Activated CD4-positive, alpha-beta T cell treated with anti-CD3 and anti-CD28 coated beads, Interleukin-2, amount 10 ng/mL, durations not matched to agents 7 days and 5 days (primary cell): ENCODE measurements at regions of chr12 and their contacts with region 1.

Region 1: DNA sequence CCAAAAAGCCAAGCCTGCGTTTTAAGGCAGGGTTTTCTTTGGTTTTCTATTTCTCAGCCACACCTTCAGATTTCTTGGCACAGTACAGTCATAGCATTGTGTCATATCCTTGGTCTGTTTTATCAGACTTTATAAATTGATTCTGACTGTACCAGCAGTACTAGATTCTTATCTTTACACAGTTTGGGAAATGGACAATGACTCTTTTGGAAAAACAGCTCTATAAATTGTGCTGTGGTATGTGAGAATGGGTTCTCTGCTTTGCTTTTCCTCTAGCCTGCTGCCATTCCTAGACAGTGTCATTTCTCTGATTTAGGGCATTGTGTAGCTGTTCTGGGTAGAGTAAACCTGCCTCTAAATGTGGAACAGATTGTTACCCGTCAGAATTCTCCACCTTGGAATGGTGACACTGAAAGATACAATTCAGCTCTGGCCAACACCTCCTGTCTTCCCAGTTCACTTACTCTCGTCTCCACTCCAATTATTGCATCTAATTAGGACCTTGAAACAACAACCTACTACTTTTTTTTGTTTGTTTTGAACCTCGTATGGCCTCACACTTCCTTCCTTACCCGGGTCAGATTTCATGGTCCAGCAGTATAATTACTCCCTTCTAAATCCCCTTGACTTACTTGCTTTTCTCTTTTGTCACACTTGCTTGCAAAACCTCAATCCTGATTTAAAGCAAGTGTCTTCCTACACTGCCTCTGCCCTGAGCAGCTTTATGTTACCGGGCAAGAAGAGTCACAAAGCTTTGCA is 226.3 kb downstream of the ERC1 start:
- DNase-seq: no peak
- H3K4me3 Mint-ChIP-seq: no peak overlapping the region
- H3K27ac Mint-ChIP-seq: no peak overlapping the region
- H3K4me1 Mint-ChIP-seq: peaks cover under 1% of the 10 kb centered on the region
- H3K27me3 Mint-ChIP-seq: no peaks in the 10 kb centered on the region

Region 2: DNA sequence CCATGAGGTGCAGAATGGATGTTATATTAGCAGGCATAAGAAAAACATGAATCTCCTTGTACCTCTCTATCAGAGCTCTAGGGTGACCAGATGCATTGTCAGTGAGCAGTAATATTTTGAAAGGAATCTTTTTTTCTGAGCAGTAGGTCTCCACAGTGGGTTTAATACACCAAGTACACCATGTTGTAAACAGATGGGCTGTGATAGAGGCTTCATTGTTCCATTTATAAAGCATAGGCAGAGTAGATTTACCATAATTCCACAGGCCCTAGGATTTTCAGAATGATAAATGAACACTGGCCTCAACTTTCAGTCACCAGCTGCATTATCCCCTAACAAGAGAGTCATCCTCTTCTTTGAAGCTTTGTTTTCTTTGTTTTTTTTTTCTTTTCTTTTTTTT is 41.2 kb before region 1 on chr12:
- CTCF ChIA-PET with region 1: no interaction called
- POLR2A ChIA-PET with region 1: no interaction called
- DNase-seq: no peak
- H3K4me3 Mint-ChIP-seq: no peak overlapping the region
- H3K27ac Mint-ChIP-seq: no peak overlapping the region
- H3K4me1 Mint-ChIP-seq: no peaks in the 10 kb centered on the region
- H3K27me3 Mint-ChIP-seq: no peaks in the 10 kb centered on the region

Region 3: GRCh38 chr12:1199700-1200099 is 17.7 kb before region 1 on chr12:
- CTCF ChIA-PET with region 1: interaction called, 3 read pairs
- POLR2A ChIA-PET with region 1: interaction called, 10 read pairs
- DNase-seq: no peak
- H3K4me3 Mint-ChIP-seq: no peak overlapping the region
- H3K27ac Mint-ChIP-seq: no peak overlapping the region
- H3K4me1 Mint-ChIP-seq: peaks cover 11% of the 10 kb centered on the region
- H3K27me3 Mint-ChIP-seq: no peaks in the 10 kb centered on the region